AG04449 (cell line): ENCODE measurements at regions of chr22 and their contacts with region 1.

Region 1: GRCh38 chr22:50525390-50526068 is at the start of gene SCO2:
- DNase-seq: peak; percentile 75
- H3K4me3 ChIP-seq: peak within 1 kb of the TSS; percentile 80
- CTCF ChIP-seq: peak; percentile 67

Region 2: GRCh38 chr22:50276143-50276542 is 249.4 kb before region 1 on chr22:
- CTCF ChIA-PET with region 1: no interaction called
- POLR2A ChIA-PET with region 1: no interaction called
- DNase-seq: no peak
- H3K4me3 ChIP-seq: no peak overlapping the region
- CTCF ChIP-seq: peak; percentile 74

Region 3: DNA sequence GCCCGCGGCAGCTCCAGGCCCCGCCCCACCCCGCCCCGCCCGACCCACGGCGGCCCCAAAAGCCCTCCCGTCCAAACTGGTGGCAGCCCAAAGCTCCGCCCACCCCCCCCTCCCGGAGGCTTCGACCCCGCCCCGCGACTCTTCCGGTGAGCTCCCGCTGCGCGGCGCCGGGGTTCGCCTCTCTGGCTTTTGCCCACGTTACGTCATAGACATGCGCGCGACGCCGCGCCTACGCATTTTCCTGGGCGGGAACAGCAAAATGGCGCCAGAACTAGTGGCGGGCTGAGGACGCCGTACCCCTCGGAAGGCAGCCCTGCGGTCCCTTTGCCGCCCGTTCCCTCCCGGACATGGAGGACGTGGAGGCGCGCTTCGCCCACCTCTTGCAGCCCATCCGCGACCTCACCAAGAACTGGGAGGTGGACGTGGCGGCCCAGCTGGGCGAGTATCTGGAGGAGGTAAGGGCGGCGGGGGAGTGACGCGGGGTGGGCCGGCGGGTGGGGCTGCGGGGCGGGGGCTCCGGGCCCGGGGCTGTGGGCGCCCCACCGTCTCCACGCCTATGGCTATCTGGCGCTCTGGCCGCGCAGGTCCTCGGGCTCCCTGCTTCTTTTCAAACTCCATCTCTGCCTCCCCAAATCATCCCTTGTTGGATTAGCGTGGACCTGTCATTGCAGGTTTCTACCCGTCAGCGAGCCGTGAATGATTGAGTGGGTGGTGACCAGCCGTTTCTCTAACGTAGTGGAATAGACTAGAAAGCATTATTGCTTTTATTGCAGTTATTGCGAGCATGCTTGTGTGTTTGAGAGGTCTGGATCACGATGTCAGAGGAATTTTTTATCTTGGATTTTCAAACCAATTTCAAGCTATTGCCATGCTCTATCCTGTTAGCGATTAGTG is 17.3 kb before region 1 on chr22 and contains the start of gene NCAPH2:
- CTCF ChIA-PET with region 1: interaction called, 18 read pairs
- POLR2A ChIA-PET with region 1: interaction called, 25 read pairs
- DNase-seq: peak; percentile 58
- H3K4me3 ChIP-seq: peak within 1 kb of the TSS; percentile 96
- CTCF ChIP-seq: no peak

Region 4: GRCh38 chr22:50537765-50538164 is 12.2 kb after region 1 on chr22:
- CTCF ChIA-PET with region 1: interaction called, 21 read pairs
- POLR2A ChIA-PET with region 1: interaction called, 8 read pairs
- DNase-seq: no peak
- H3K4me3 ChIP-seq: no peak overlapping the region
- CTCF ChIP-seq: no peak

Region 5: GRCh38 chr22:50544078-50544745 is 18.7 kb after region 1 on chr22:
- CTCF ChIA-PET with region 1: interaction called, 25 read pairs
- POLR2A ChIA-PET with region 1: interaction called, 8 read pairs
- DNase-seq: no peak
- H3K4me3 ChIP-seq: peak overlapping the region; percentile 27
- CTCF ChIP-seq: peak; percentile 77

Region 6: DNA sequence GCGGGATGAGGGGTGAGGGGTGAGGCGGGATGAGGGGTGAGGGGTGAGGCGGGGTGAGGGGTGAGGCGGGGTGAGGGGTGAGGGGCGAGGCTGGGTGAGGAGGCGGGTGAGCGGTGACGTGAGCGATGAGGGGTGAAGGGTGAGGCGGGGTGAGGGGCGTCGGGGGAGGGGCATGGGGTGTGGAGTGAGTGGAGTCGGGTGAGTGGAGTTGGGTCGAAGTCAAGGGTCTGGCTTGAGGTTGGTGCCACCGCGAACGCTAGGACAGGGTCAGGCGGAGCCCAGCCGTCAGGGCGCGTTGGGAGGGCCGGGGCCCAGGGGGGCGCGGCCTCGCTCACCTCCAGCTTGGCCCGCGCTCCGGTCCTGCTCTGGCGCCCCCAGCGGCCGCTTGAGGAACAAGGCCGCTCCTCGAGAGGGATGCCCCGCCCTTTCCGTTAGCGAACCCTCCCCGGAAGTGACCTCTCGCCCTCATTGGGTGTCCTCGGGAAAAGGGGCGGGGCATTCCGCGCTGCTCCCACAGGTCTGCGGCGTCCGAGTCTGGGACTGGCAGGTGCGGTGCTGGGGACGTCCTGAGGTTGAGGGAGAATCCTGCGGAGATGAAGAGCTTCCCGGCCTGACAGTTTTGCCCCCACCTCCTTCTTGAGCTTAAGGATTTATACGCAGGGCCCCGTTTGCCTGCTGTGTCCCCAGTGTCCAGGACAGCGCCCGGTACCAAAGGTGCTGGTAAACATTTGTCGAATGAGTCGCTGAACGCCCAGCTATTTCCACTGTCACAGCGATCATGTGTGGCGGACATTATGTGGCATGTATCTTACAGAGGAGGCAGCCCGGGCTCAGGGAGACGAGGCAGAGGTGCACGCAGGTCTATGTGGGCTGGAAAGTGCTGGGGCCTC is 37.2 kb after region 1 on chr22 and contains the start of gene SYCE3:
- CTCF ChIA-PET with region 1: interaction called, 15 read pairs
- POLR2A ChIA-PET with region 1: interaction called, 3 read pairs
- DNase-seq: peak; percentile 28
- H3K4me3 ChIP-seq: peak within 1 kb of the TSS; percentile 67
- CTCF ChIP-seq: peak; percentile 91

Region 7: DNA sequence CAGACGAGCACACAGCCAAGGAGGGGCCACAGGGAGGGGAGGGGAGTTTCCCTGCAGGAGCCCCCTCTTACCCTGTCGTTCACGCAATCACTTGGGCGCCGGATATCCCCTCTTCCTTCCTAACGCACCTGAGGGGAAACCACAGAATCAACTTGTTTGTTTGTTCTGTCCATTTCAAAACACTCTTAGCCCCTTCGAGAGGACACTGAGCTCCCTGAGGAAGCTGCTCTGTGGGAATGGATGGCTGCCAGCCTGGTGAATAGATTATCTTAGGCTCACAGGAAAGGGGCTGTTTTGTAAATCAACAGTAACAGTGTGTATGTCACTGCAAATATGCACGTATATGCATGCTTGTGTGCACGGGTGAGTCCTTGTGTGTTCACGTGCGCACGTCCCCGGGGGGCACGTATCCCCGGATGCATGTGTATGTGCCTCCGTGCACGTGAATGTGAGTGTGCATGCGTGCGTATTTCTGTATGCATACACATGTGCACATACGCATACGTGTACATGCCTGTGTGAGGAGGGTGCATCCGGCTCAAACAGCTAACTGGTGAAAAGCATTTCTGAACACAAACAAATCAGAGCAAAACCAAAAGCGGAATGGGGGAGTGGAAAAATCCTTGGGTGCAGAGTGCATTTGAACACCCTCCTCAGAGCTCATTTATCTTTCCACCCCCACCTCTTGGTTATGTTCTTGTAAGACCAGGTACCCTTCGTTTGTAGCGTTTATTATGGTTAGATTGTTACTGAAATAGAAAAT is 95.2 kb after region 1 on chr22:
- CTCF ChIA-PET with region 1: interaction called, 33 read pairs
- POLR2A ChIA-PET with region 1: interaction called, 14 read pairs
- DNase-seq: no peak
- H3K4me3 ChIP-seq: no peak overlapping the region
- CTCF ChIP-seq: no peak